ENCODE measurements at regions of chr14 and their contacts with region 1.

Region 1: DNA sequence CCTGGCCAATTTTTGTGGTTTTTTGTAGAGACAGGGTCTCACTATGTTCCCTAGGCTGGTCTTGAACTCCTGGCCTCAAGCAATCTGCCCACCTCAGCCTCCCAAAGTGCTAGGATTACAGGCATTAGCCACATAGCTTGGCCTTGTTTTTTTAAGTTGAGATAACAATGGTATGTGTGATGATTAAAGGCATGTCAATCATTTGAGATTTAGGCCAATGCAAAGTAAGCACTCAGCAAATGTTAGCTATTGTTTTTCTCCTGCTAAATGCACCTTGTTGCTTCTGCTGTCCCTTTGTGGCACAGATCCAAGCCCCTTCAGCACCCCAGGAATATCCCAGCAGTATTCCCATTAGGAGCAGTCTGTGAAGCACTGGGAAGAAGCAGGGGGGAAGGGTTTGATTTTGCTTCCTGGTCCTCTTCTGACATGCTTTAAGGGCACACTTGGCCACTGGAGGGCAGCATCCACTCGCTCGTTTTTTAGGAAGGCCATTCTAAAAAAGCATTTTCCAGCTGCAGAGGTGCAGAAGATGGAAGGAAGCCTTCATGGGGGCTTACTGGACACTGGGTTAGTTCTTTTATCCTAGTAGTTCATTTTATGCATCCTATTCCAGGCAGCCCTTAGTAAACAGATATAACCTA is 70.2 kb upstream of the ZFP36L1 start:
- DNase-seq: no peak
- H3K4me3 ChIP-seq: no peak overlapping the region
- H3K27ac ChIP-seq: no peak overlapping the region
- H3K4me1 ChIP-seq: peaks cover 0 to 3% (median 0%) of the 10 kb centered on the region in 3 donors
- H3K27me3 ChIP-seq: no peaks in the 10 kb centered on the region
- CTCF ChIP-seq: peak; percentile 39 to 81 (median 73)
- POLR2A ChIP-seq: no peak

Region 2: GRCh38 chr14:69107407-69108003 is 244.4 kb after region 1 on chr14:
- intact Hi-C with region 1: loop called (anchors 5 kb)
- DNase-seq: no peak
- H3K4me3 ChIP-seq: no peak overlapping the region
- H3K27ac ChIP-seq: no peak overlapping the region
- H3K4me1 ChIP-seq: no peaks in the 10 kb centered on the region
- H3K27me3 ChIP-seq: no peaks in the 10 kb centered on the region
- CTCF ChIP-seq: peak in 5 of 6 experiments; percentile 59 to 83 (median 67)
- POLR2A ChIP-seq: no peak